HepG2 (cell line): ENCODE measurements at regions of chr12 and their contacts with region 1.

Region 1: DNA sequence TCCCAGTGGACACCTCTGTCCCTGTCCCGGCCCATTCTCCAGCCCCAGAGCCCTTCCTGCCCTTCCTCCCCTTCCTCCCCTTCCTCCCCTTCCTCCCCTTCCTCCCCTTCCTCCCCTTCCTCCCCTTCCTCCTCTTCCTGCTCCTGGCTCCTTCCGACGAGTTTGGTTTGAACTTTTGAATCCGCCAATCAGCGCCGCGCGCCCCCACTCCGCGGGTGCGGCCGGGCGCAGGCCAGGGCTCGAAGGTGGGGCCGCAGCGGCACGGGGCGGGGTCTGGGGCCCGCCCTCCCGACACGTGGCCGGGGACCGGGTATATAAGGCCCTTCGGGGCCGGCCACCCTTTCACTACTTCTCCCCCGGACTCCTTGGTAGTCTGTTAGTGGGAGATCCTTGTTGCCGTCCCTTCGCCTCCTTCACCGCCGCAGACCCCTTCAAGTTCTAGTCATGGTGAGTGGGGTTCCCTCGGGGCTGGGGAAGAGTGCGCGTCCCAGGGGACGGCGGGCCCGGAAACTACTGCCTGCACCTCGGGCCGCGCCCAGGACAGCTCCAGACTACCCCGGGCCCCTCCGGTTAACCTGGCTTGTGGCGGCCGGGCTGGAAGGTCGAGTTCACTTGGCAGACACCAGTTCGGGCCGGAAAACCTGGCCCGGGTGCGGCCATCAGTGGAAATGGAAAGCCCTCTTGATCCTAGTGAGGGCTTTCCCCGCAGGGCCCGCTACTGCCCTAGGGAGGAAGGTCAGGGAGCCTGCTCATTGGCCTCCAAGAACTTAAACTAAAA is at the start of gene TUBA1C:
- DNase-seq: peak; percentile 88
- ATAC-seq: peak; percentile 84
- H3K4me3 ChIP-seq: peak within 1 kb of the TSS; percentile 96 to 98 (median 96)
- H3K27ac ChIP-seq: peak within 1 kb of the TSS; percentile 95
- H3K4me1 ChIP-seq: peaks cover 45% of the 10 kb centered on the region
- H3K27me3 ChIP-seq: no peaks in the 10 kb centered on the region; a peak in 1 of 5 replicates
- CTCF ChIP-seq: no peak
- EP300 ChIP-seq: peak in 1 of 2 experiments; percentile 32; a peak in 1 of 4 replicates
- POLR2A ChIP-seq: peak; percentile 96 to 99
- RAD21 ChIP-seq: peak; percentile 64
- total RNA-seq, gene TUBA1C: 693 and 807 TPM in 2 replicates

Region 2: GRCh38 chr12:49130151-49131050 is 134.5 kb before region 1 on chr12:
- CTCF ChIA-PET with region 1: no interaction called
- POLR2A ChIA-PET with region 1: interaction called, 15 read pairs
- in situ Hi-C with region 1: no loop called
- intact Hi-C with region 1: no loop called
- DNase-seq: peak; percentile 85
- ATAC-seq: peak; percentile 74
- H3K4me3 ChIP-seq: peak overlapping the region; percentile 72 to 94 (median 82)
- H3K27ac ChIP-seq: peak overlapping the region; percentile 96
- H3K4me1 ChIP-seq: peaks cover 45% of the 10 kb centered on the region
- H3K27me3 ChIP-seq: no peaks in the 10 kb centered on the region
- CTCF ChIP-seq: peak; percentile 97
- EP300 ChIP-seq: peak in 1 of 2 experiments; percentile 65; a peak in 1 of 4 replicates
- POLR2A ChIP-seq: peak; percentile 13 to 76; a peak in 3 of 4 replicates
- RAD21 ChIP-seq: peak; percentile 76

Region 3: DNA sequence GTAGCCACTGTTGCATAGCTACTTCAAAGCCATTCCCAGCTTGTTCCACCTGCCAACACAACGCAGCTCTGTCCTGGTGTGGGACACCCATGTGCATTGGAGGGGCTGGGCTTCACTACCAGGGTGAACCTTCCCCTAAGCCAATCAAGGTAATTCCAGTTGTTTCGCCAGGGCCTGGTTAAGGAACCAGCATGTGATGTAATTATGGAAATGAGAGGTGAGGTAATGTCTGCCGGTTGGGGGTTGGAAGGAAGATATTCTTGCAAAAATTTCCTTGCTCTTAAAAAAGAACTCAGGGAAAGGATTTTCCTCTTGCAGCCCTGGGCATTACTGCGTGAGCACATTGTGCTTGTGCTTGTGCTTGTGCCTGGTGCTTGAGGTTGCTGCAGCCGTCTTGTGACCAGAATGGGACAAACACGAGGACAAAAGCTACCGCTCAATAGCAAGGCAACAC is 14.8 kb after region 1 on chr12:
- CTCF ChIA-PET with region 1: no interaction called
- POLR2A ChIA-PET with region 1: interaction called, 56 read pairs
- in situ Hi-C with region 1: no loop called
- intact Hi-C with region 1: no loop called
- DNase-seq: peak; percentile 56
- ATAC-seq: peak; percentile 24
- H3K4me3 ChIP-seq: peak overlapping the region in 2 of 3 experiments; percentile 8 to 18; a peak in 1 of 6 replicates
- H3K27ac ChIP-seq: no peak overlapping the region
- H3K4me1 ChIP-seq: peaks cover 49% of the 10 kb centered on the region
- H3K27me3 ChIP-seq: peaks cover 5 to 28% of the 10 kb centered on the region in 2 experiments; a peak in 4 of 5 replicates
- CTCF ChIP-seq: no peak
- EP300 ChIP-seq: no peak
- POLR2A ChIP-seq: no peak
- RAD21 ChIP-seq: no peak

Region 4: GRCh38 chr12:49322708-49323523 is 58.0 kb after region 1 on chr12 and contains the start of gene TROAP:
- CTCF ChIA-PET with region 1: no interaction called
- POLR2A ChIA-PET with region 1: interaction called, 10 read pairs
- in situ Hi-C with region 1: no loop called
- intact Hi-C with region 1: no loop called
- DNase-seq: peak; percentile 97
- ATAC-seq: peak; percentile 99
- H3K4me3 ChIP-seq: peak within 1 kb of the TSS; percentile 81 to 98 (median 96)
- H3K27ac ChIP-seq: peak within 1 kb of the TSS; percentile 75
- H3K4me1 ChIP-seq: peaks cover 15% of the 10 kb centered on the region
- H3K27me3 ChIP-seq: peaks cover 0 to 4% of the 10 kb centered on the region in 2 experiments; a peak in 1 of 5 replicates
- CTCF ChIP-seq: no peak
- EP300 ChIP-seq: no peak
- POLR2A ChIP-seq: peak; percentile 68 to 83
- RAD21 ChIP-seq: no peak
- total RNA-seq, gene TROAP: 27.0 and 30.9 TPM in 2 replicates

Region 5: DNA sequence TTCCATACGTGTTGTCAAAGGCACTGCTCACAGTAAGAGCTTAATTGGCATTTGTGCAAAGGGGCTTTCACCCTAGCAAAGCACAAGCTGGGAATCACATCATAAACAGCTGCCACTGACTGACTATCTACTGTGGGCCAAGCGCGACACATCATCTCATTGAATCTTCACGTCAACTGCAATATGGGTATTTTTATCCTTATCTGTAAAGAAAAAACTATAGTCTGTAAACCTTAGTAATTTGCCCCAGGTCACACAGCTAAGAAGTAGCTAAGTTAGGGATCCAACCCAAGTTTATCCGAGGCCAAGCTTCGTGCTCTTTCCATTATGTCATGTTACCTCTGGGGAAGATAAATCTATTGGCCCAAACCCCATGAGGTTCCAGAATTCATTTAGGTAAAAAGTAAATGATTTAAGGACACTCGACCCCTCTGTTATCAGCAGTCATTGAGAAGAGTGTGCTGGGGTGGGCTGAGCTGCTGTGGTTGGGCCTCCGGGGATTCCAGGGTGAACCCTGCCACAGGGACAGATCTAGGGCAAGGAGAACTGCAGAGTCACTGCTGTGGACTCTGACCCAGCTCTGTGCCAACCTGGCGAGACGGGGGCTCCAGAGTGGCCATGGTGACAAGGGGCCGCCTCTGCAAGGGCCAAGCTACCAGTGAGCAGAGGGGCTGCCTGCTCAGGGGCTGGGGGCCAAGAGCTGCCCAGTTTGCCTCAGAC is 535.7 kb after region 1 on chr12:
- CTCF ChIA-PET with region 1: no interaction called
- POLR2A ChIA-PET with region 1: no interaction called
- in situ Hi-C with region 1: no loop called
- intact Hi-C with region 1: loop called (anchors 5 kb)
- DNase-seq: peak; percentile 26
- ATAC-seq: peak; percentile 53
- H3K4me3 ChIP-seq: no peak overlapping the region
- H3K27ac ChIP-seq: peak overlapping the region; percentile 64
- H3K4me1 ChIP-seq: peaks cover 20% of the 10 kb centered on the region
- H3K27me3 ChIP-seq: no peaks in the 10 kb centered on the region
- CTCF ChIP-seq: no peak
- EP300 ChIP-seq: no peak
- POLR2A ChIP-seq: no peak
- RAD21 ChIP-seq: no peak